Activated CD4-positive, alpha-beta T cell treated with anti-CD3 and anti-CD28 coated beads for 36 hours (primary cell): ENCODE measurements at regions of chr5 and their contacts with region 1.

Region 1: GRCh38 chr5:33440482-33441240 is at the start of gene TARS1:
- DNase-seq: peak; percentile 96
- ATAC-seq: peak; percentile 96
- H3K4me3 Mint-ChIP-seq: no peak within 1 kb of the TSS
- H3K27ac Mint-ChIP-seq: no peak within 1 kb of the TSS
- H3K4me1 Mint-ChIP-seq: peaks cover 35% of the 10 kb centered on the region
- H3K27me3 Mint-ChIP-seq: no peaks in the 10 kb centered on the region
- total RNA-seq, gene TARS1: 285 to 357 TPM

Region 2: GRCh38 chr5:31531888-31532710 is 1908.6 kb before region 1 on chr5 and contains the starts of genes C5orf22 and DROSHA:
- CTCF ChIA-PET with region 1: no interaction called
- POLR2A ChIA-PET with region 1: no interaction called
- intact Hi-C with region 1: loop called in 1 of 2 experiments (anchors 2 kb)
- DNase-seq: peak; percentile 96
- ATAC-seq: peak; percentile 97
- H3K4me3 Mint-ChIP-seq: peak within 1 kb of the TSS; percentile 82
- H3K27ac Mint-ChIP-seq: peak within 1 kb of the TSS; percentile 80
- H3K4me1 Mint-ChIP-seq: peaks cover 39% of the 10 kb centered on the region
- H3K27me3 Mint-ChIP-seq: no peaks in the 10 kb centered on the region
- total RNA-seq, gene C5orf22: 25.2 to 30.6 TPM
- total RNA-seq, gene DROSHA: 84.3 to 94.4 TPM

Region 3: GRCh38 chr5:32312647-32313523 is 1127.8 kb before region 1 on chr5 and contains the start of gene MTMR12:
- CTCF ChIA-PET with region 1: no interaction called
- POLR2A ChIA-PET with region 1: no interaction called
- intact Hi-C with region 1: loop called in 1 of 2 experiments (anchors 2 kb)
- DNase-seq: peak; percentile 100
- ATAC-seq: peak; percentile 97
- H3K4me3 Mint-ChIP-seq: peak within 1 kb of the TSS; percentile 87
- H3K27ac Mint-ChIP-seq: peak within 1 kb of the TSS; percentile 86
- H3K4me1 Mint-ChIP-seq: peaks cover 30% of the 10 kb centered on the region
- H3K27me3 Mint-ChIP-seq: no peaks in the 10 kb centered on the region
- total RNA-seq, gene MTMR12: 21.6 to 22.8 TPM

Region 4: GRCh38 chr5:33361786-33362185 is 78.9 kb before region 1 on chr5:
- CTCF ChIA-PET with region 1: no interaction called
- POLR2A ChIA-PET with region 1: no interaction called
- intact Hi-C with region 1: no loop called
- DNase-seq: no peak
- ATAC-seq: no peak
- H3K4me3 Mint-ChIP-seq: no peak overlapping the region
- H3K27ac Mint-ChIP-seq: no peak overlapping the region
- H3K4me1 Mint-ChIP-seq: peaks cover 2% of the 10 kb centered on the region
- H3K27me3 Mint-ChIP-seq: peaks cover 2% of the 10 kb centered on the region

Region 5: DNA sequence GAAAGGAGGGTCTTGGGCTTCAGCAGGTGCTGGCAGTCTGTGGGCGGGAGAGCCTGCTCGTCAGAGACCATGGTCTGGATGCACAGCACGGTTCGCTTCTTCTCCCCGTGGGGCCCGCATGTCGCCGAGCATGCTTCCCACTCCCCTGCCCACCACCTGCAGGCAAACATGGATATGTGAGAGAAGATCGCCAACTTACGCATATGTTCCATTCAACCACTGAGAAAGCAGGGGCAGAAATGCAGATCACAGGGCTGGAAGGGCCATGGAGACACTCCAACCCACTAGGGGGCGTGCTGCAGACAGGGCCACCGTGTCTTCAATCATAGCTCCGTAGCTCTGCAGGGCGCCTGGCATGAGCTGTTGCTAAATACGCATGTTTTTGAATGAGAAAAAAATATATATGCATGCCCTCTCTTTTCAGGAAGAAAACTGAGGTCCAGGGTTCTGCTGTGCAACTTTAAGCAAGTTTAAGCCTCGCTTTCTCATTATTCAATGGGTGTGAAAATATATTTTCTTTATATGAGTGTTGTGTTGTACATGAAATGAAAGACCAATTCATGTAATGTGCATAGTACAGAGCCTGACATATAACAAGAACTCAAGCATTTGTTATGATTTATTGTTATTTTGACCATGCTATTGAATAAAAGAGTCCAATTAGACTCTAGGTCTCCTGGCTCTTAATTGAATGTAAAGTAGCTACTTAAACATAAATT is 148.2 kb after region 1 on chr5:
- CTCF ChIA-PET with region 1: interaction called, 7 read pairs
- POLR2A ChIA-PET with region 1: no interaction called
- intact Hi-C with region 1: loop called in 1 of 2 experiments (anchors 10 kb)
- DNase-seq: peak; percentile 74
- ATAC-seq: peak; percentile 69
- H3K4me3 Mint-ChIP-seq: no peak overlapping the region
- H3K27ac Mint-ChIP-seq: no peak overlapping the region
- H3K4me1 Mint-ChIP-seq: no peaks in the 10 kb centered on the region
- H3K27me3 Mint-ChIP-seq: peaks cover 4% of the 10 kb centered on the region

Region 6: GRCh38 chr5:33969572-33970452 is 529.2 kb after region 1 on chr5:
- CTCF ChIA-PET with region 1: interaction called, 5 read pairs
- POLR2A ChIA-PET with region 1: no interaction called
- intact Hi-C with region 1: loop called (anchors 1 to 10 kb)
- DNase-seq: peak; percentile 16
- ATAC-seq: peak; percentile 60
- H3K4me3 Mint-ChIP-seq: no peak overlapping the region
- H3K27ac Mint-ChIP-seq: no peak overlapping the region
- H3K4me1 Mint-ChIP-seq: peaks cover 13% of the 10 kb centered on the region
- H3K27me3 Mint-ChIP-seq: no peaks in the 10 kb centered on the region

Region 7: GRCh38 chr5:34459908-34460307 is 1019.2 kb after region 1 on chr5:
- CTCF ChIA-PET with region 1: no interaction called
- POLR2A ChIA-PET with region 1: no interaction called
- intact Hi-C with region 1: loop called in 1 of 2 experiments (anchors 5 kb)
- DNase-seq: no peak
- ATAC-seq: no peak
- H3K4me3 Mint-ChIP-seq: no peak overlapping the region
- H3K27ac Mint-ChIP-seq: no peak overlapping the region
- H3K4me1 Mint-ChIP-seq: peaks cover under 1% of the 10 kb centered on the region
- H3K27me3 Mint-ChIP-seq: peaks cover 6% of the 10 kb centered on the region

Region 8: DNA sequence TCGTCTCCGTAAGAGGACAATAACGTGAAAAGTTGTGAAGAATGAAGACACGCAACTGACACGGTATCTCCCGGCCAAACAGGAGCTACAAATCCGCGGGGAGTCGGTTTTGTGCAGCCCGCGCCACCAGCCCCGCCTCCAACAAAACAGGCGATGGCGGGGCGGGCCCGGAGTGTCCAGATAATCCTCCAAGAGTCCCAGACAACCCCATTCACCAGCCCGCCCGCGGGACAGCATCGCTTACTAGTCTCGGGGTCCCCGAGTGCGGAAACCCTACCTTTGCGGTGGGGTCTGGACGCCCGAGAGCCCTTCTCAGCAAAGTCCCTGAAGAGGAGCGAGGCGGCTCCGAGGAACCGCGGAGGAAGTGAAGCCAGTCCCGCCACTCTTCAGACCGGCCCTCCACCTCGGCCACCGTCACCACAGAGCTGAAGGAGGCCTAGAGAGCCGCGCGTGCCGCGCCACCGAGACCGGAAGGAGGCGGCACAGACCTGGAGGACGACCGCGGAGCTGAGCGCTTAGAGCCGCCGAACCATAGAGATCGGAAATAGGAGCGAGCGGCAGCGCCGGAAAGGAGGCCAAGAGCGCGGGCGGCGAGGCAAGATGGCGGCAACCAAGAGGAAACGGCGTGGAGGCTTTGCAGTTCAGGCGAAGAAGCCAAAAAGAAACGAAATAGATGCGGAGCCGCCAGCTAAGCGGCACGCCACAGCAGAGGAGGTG is 1474.6 kb after region 1 on chr5 and contains the starts of genes BRIX1 and RAD1:
- CTCF ChIA-PET with region 1: no interaction called
- POLR2A ChIA-PET with region 1: no interaction called
- intact Hi-C with region 1: loop called (anchors 1 to 10 kb)
- DNase-seq: peak; percentile 98
- ATAC-seq: peak; percentile 98
- H3K4me3 Mint-ChIP-seq: no peak within 1 kb of the TSS
- H3K27ac Mint-ChIP-seq: peak within 1 kb of the TSS; percentile 60
- H3K4me1 Mint-ChIP-seq: peaks cover 37% of the 10 kb centered on the region
- H3K27me3 Mint-ChIP-seq: no peaks in the 10 kb centered on the region
- total RNA-seq, gene BRIX1: 81.2 to 104 TPM
- total RNA-seq, gene RAD1: 38.7 to 43.0 TPM